Posterior vena cava (tissue), 2 donors: ENCODE measurements at regions of chr20 and their contacts with region 1.

Region 1: DNA sequence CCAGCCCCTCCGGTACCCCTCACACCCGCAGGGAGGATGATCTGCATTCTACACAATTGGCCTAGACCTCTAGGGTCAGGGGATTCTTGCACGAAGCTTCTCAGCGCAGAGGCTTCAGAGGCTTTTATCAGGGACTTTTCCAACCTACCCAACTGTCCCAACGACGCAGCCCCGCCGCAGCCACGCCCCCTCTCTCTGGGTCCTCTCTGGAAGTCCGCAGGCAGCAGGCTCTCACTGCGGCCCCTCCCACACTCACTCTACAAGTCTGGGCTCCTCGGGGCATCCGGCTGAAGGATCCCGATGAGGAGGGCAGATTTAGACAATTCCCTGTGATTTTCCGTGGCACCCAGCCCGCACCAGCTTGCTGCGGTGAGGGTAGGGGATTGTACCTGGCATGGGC is 227.7 kb upstream of the RNF24 start:
- DNase-seq: no peak

Region 2: GRCh38 chr20:3767427-3768341 is 475.4 kb before region 1 on chr20 and contains the start of gene ADISSP:
- intact Hi-C with region 1: no loop called
- DNase-seq: peak; percentile 100
- total RNA-seq, gene ADISSP: 14.6 to 20.2 TPM

Region 3: GRCh38 chr20:4591975-4592315 is 348.9 kb after region 1 on chr20:
- intact Hi-C with region 1: loop called in 1 of 2 experiments (anchors 2 kb)
- DNase-seq: no peak